Esophagus muscularis mucosa (tissue), 4 donors: ENCODE measurements at regions of chr2 and their contacts with region 1.

Region 1: DNA sequence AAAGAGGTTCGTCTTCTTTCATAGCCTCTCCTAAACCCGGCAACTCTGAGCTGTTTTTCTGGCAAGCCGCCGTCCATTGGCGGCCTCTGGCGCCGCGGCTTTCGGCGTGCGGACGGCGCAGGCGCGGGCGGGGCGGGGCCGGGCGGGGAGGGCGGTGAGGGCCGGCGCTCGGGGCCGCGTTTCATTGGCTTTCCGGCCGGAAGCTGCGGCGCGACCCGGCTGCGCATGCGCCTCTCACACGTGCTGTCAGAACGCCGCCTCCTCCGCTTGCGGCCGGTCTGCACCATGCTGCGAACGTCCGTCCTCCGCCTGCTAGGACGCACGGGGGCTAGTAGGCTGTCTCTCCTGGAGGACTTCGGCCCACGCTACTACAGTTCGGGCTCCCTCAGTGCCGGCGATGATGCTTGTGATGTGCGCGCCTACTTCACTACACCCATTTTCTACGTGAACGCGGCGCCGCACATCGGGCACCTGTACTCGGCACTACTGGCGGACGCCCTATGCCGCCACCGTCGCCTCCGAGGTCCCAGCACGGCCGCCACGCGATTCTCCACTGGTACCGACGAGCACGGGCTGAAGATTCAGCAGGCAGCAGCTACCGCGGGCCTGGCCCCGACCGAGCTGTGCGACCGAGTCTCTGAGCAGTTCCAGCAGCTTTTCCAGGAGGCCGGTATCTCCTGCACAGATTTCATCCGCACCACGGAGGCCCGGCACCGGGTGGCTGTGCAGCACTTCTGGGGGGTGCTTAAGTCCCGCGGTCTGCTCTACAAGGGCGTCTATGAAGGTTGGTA is at the start of gene MARS2:
- DNase-seq: peak; percentile 98
- H3K4me3 ChIP-seq: peak within 1 kb of the TSS; percentile 82 to 95 (median 92)
- H3K27ac ChIP-seq: peak within 1 kb of the TSS; percentile 76 to 87 (median 78)
- H3K4me1 ChIP-seq: peaks cover 25 to 56% (median 40%) of the 10 kb centered on the region in 4 donors
- H3K27me3 ChIP-seq: no peaks in the 10 kb centered on the region
- CTCF ChIP-seq: peak in 2 of 3 experiments; percentile 7
- EP300 ChIP-seq: no peak
- POLR2A ChIP-seq: peak; percentile 18
- total RNA-seq, gene MARS2: 3.3 to 9.6 (median 5.1) TPM

Region 2: DNA sequence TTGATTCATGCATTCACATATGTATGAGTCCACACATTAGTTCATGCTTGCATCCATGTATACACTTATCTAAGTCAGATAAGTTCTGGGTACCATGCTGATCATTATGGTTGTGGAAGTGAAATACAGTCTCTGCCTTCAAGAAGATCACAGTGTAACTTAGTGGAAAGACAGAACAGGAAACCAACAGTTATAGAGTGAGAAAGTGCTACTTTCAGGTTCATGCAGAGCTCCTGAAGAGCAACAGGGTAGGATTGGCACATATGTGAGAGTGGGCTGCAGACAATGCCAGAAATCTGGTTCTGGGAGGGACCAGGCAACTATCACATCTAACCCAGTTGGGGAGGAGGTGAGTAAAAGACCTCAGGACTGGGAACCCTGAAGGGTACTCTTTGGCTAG is 743.4 kb before region 1 on chr2:
- intact Hi-C with region 1: no loop called
- DNase-seq: no peak
- H3K4me3 ChIP-seq: no peak overlapping the region
- H3K27ac ChIP-seq: no peak overlapping the region
- H3K4me1 ChIP-seq: no peaks in the 10 kb centered on the region
- H3K27me3 ChIP-seq: no peaks in the 10 kb centered on the region
- CTCF ChIP-seq: no peak
- EP300 ChIP-seq: no peak
- POLR2A ChIP-seq: no peak

Region 3: GRCh38 chr2:197369228-197369932 is 335.9 kb before region 1 on chr2:
- intact Hi-C with region 1: no loop called
- DNase-seq: no peak
- H3K4me3 ChIP-seq: no peak overlapping the region
- H3K27ac ChIP-seq: no peak overlapping the region
- H3K4me1 ChIP-seq: no peaks in the 10 kb centered on the region
- H3K27me3 ChIP-seq: no peaks in the 10 kb centered on the region
- CTCF ChIP-seq: no peak
- EP300 ChIP-seq: no peak
- POLR2A ChIP-seq: no peak

Region 4: DNA sequence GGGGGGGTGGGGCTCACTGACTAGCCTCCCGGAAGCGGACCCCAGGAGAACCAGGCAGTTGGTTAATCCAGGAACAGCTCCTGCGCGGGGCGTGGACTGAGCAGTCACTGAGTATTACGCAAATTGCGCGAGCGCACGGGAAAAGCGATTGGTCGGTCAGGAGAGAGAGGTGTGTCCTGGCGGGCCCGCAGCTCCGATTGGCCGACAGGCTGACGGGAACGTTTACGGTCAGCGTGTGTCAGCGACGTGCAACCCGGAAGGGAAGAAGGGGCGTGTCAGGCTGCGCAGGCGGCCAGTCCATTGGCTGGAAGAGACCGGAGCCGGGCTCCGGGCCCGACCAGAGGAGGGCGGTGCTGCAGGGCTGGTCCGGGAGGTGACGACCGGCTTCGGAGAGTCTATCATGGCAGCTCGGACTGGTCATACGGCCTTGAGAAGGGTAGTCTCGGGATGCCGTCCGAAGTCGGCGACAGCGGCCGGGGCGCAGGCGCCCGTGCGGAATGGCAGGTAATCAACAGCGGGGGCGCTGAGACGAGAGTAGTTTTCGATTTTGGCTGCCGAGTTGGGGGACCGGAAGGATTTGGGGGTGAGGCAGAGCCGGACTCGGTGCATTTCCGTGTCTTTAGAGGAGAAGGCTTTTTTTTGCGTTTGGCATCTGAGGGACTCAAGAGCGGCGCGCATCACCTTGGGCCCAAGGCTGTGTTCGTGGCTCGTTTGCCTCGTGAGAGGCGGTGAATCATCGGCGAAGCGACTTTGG is 252.0 kb before region 1 on chr2 and contains the start of gene COQ10B:
- intact Hi-C with region 1: loop called (anchors 10 kb)
- DNase-seq: peak; percentile 100
- H3K4me3 ChIP-seq: peak within 1 kb of the TSS; percentile 75 to 87 (median 80)
- H3K27ac ChIP-seq: peak within 1 kb of the TSS; percentile 97 to 100 (median 100)
- H3K4me1 ChIP-seq: peaks cover 17 to 44% (median 34%) of the 10 kb centered on the region in 4 donors
- H3K27me3 ChIP-seq: no peaks in the 10 kb centered on the region
- CTCF ChIP-seq: peak; percentile 26 to 38 (median 32)
- EP300 ChIP-seq: peak; percentile 73
- POLR2A ChIP-seq: peak; percentile 74
- total RNA-seq, gene COQ10B: 27.0 to 58.8 (median 43.8) TPM

Region 5: GRCh38 chr2:197514754-197515153 is 190.6 kb before region 1 on chr2:
- intact Hi-C with region 1: loop called (anchors 5 kb)
- DNase-seq: no peak
- H3K4me3 ChIP-seq: peak overlapping the region; percentile 71 to 93 (median 90)
- H3K27ac ChIP-seq: peak overlapping the region; percentile 88 to 94 (median 92)
- H3K4me1 ChIP-seq: peaks cover 24 to 39% (median 36%) of the 10 kb centered on the region in 4 donors
- H3K27me3 ChIP-seq: no peaks in the 10 kb centered on the region
- CTCF ChIP-seq: no peak
- EP300 ChIP-seq: no peak
- POLR2A ChIP-seq: no peak

Region 6: DNA sequence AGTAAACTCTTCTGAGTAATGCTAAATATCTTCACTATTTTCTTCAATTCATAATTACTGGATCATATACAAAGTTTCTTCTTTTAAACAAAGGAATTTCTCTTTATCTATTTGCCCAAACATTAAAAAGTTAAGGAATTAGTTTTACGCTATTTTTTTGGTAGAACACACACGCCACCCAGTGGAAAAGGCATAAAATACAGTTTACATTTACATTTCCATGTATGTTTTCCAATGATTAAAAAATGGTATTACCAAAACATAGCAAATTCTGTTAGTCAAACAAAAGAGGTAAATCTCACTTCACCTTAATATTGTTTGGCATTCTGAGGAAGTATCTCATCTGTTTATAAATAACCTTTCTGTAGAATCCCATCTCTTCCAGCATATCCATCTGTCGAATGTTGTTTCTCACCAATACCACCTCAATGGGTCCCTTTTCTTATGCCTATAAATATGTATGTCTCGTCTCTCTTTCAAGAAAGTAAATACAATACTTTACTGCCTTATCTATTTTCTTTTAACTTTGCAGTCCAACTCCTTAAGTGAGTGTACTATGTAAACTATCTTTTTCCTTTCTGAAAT is 72.6 kb after region 1 on chr2:
- intact Hi-C with region 1: loop called (anchors 2 kb)
- DNase-seq: no peak
- H3K4me3 ChIP-seq: no peak overlapping the region
- H3K27ac ChIP-seq: no peak overlapping the region
- H3K4me1 ChIP-seq: no peaks in the 10 kb centered on the region
- H3K27me3 ChIP-seq: peaks cover 0 to 4% (median 2%) of the 10 kb centered on the region in 4 donors
- CTCF ChIP-seq: peak; percentile 64 to 70 (median 66)
- EP300 ChIP-seq: no peak
- POLR2A ChIP-seq: no peak

Region 7: DNA sequence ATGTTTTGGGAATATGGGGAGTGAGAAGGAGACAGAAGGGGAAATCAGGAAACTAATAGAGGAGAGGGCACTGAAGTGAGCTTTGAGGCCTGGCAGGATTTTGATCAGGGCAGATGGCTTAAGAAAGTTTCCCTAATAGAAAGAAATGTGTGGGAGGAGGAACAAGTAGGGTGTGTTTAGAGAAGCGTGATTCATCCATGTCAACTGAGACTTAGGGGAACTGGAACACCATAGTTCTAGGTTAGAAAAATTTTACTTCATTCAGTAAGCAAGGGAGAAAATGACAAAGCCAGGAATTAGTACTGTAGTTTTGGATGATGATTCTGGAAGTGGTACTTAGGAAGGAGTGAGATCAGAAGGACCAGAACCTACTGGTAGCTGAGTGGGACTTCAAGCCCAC is 395.0 kb after region 1 on chr2:
- intact Hi-C with region 1: no loop called
- DNase-seq: no peak
- H3K4me3 ChIP-seq: no peak overlapping the region
- H3K27ac ChIP-seq: peak overlapping the region in 1 of 4 donors; percentile 35
- H3K4me1 ChIP-seq: peaks cover 16 to 39% (median 29%) of the 10 kb centered on the region in 4 donors
- H3K27me3 ChIP-seq: no peaks in the 10 kb centered on the region
- CTCF ChIP-seq: no peak
- EP300 ChIP-seq: no peak
- POLR2A ChIP-seq: no peak